Aorta (tissue), 5 donors: ENCODE measurements at regions of chr3 and their contacts with region 1.

Region 1: GRCh38 chr3:47164007-47164881 is at the start of gene SETD2:
- DNase-seq: peak; percentile 96 to 98
- ATAC-seq: peak; percentile 97
- H3K4me3 ChIP-seq: peak within 1 kb of the TSS; percentile 94 to 97
- H3K27ac ChIP-seq: peak within 1 kb of the TSS; percentile 85 to 87
- H3K4me1 ChIP-seq: peaks cover 0 to 15% of the 10 kb centered on the region in 2 donors
- H3K27me3 ChIP-seq: no peaks in the 10 kb centered on the region
- total RNA-seq, gene SETD2: 51.8 to 62.5 TPM

Region 2: GRCh38 chr3:46935168-46935858 is 228.9 kb before region 1 on chr3:
- intact Hi-C with region 1: loop called in 1 of 2 experiments (anchors 10 kb)
- DNase-seq: peak; percentile 93
- ATAC-seq: peak; percentile 93
- H3K4me3 ChIP-seq: no peak overlapping the region
- H3K27ac ChIP-seq: peak overlapping the region; percentile 39 to 77
- H3K4me1 ChIP-seq: peaks cover 7 to 17% of the 10 kb centered on the region in 2 donors
- H3K27me3 ChIP-seq: no peaks in the 10 kb centered on the region

Region 3: DNA sequence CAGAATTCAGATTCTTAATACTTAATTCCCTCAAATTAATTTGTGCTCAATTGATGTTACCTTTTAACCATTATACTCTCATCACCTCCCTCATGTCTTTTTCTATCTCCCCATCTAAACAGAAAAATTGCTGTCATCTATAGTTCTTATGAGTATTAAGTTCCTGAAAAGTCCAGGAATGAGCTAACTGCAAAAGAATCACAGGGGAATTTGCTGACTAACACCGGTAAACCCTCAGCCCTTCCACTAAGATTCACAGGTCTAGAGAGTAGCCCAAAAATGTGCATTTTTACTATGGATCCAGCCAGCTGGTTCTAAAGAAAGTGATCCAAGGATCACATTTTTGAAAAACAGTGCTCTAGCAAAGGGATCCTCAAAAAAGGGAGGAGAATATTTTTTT is 67.3 kb before region 1 on chr3:
- intact Hi-C with region 1: loop called in 1 of 2 experiments (anchors 10 kb)
- DNase-seq: no peak
- ATAC-seq: no peak
- H3K4me3 ChIP-seq: no peak overlapping the region
- H3K27ac ChIP-seq: no peak overlapping the region
- H3K4me1 ChIP-seq: no peaks in the 10 kb centered on the region
- H3K27me3 ChIP-seq: no peaks in the 10 kb centered on the region

Region 4: DNA sequence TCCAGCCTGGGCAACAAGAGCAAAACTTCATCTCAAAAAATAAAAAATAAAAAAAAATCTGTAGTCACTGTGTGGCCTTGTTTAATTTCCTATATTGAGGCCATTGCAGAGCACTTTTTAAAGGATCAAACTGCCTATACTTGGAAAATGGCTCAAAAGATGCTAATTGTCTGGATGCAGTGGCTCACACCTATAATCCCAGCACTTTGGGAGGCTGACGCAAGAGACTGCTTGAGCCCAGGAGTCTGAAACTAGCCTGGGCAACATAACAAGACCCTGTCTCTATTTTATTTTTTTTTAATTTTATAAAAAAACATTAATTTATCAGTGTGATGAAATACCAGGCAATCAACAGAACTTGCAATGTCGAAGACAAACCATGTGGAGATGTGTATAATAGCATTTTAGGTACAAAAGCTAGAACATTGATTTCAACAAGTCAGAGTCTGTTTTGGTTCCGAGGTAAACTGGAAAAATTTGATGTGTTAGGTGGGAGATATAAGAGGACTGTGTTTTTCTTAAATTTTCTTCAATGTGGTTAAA is 46.7 kb after region 1 on chr3:
- intact Hi-C with region 1: no loop called
- DNase-seq: no peak
- ATAC-seq: no peak
- H3K4me3 ChIP-seq: no peak overlapping the region
- H3K27ac ChIP-seq: no peak overlapping the region
- H3K4me1 ChIP-seq: no peaks in the 10 kb centered on the region
- H3K27me3 ChIP-seq: no peaks in the 10 kb centered on the region